ENCODE measurements at regions of chr2 and their contacts with region 1.

Region 1: DNA sequence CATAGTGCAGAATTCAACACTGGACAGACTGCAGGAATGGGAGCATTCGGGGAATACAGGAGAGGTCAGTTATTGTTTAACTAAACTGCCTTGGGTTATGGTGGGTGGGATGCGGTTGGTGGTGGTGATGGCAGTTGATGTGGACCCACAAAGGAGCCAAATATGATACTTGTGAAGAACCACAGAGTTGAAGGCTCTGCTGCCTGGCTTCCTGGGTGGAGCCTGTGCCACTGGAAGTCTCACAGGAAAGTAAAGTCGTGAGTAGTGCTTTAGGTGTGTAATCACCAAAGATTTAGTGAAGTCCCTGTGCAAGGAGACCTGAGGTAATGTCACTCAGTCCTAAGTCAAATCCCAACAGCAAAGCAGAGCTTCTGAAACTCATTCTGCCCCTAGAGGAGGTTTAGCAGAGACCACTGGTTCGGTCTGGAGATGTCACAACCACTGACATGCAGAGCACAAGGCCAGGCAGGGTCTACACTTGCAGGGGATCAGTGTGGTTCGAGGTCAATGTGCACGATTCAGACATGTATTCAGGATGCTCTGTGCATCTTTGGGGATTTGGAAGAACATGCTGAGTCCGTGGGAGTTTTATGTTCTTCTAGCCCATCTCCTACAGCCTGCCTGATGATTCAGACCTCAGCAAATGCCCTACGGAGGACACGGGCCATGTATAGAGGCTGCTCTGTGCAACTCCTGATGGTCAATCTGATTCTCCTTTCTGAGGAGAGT is 1150.9 kb downstream of the RPIA start:
- DNase-seq: no peak
- ATAC-seq: no peak
- H3K4me3 ChIP-seq: no peak overlapping the region
- H3K27ac ChIP-seq: no peak overlapping the region
- H3K4me1 ChIP-seq: no peaks in the 10 kb centered on the region
- H3K27me3 ChIP-seq: no peaks in the 10 kb centered on the region
- CTCF ChIP-seq: no peak

Region 2: GRCh38 chr2:89792626-89793025 is 49.7 kb before region 1 on chr2:
- intact Hi-C with region 1: no loop called
- DNase-seq: no peak
- ATAC-seq: no peak
- H3K4me3 ChIP-seq: no peak overlapping the region
- H3K27ac ChIP-seq: no peak overlapping the region
- H3K4me1 ChIP-seq: no peaks in the 10 kb centered on the region
- H3K27me3 ChIP-seq: no peaks in the 10 kb centered on the region
- CTCF ChIP-seq: no peak

Region 3: GRCh38 chr2:89818873-89819272 is 23.5 kb before region 1 on chr2:
- intact Hi-C with region 1: loop called in 1 of 2 experiments (anchors 2 kb)
- DNase-seq: no peak
- ATAC-seq: no peak
- H3K4me3 ChIP-seq: no peak overlapping the region
- H3K27ac ChIP-seq: no peak overlapping the region
- H3K4me1 ChIP-seq: no peaks in the 10 kb centered on the region
- H3K27me3 ChIP-seq: no peaks in the 10 kb centered on the region
- CTCF ChIP-seq: no peak

Measured in psoas muscle (tissue), 8 donors.